CD4-positive, alpha-beta memory T cell (primary cell): ENCODE measurements at regions of chrX and their contacts with region 1.

Region 1: GRCh38 chrX:74550295-74550802 is 64.1 kb downstream of the RLIM start:
- DNase-seq: peak; percentile 75 to 83 (median 82)
- H3K4me3 ChIP-seq: peak overlapping the region in 1 of 2 donors; percentile 28
- H3K4me3 Mint-ChIP-seq: peak overlapping the region in 7 of 8 donors; percentile 60 to 86 (median 75)
- H3K27ac ChIP-seq: no peak overlapping the region
- H3K27ac Mint-ChIP-seq: peak overlapping the region in 5 of 7 donors; percentile 20 to 79 (median 51)
- H3K4me1 ChIP-seq: no peaks in the 10 kb centered on the region
- H3K4me1 Mint-ChIP-seq: peaks cover 1 to 4% (median 3%) of the 10 kb centered on the region in 4 donors
- H3K27me3 ChIP-seq: no peaks in the 10 kb centered on the region
- H3K27me3 Mint-ChIP-seq: peaks cover 0 to 2% of the 10 kb centered on the region in 2 donors

Region 2: DNA sequence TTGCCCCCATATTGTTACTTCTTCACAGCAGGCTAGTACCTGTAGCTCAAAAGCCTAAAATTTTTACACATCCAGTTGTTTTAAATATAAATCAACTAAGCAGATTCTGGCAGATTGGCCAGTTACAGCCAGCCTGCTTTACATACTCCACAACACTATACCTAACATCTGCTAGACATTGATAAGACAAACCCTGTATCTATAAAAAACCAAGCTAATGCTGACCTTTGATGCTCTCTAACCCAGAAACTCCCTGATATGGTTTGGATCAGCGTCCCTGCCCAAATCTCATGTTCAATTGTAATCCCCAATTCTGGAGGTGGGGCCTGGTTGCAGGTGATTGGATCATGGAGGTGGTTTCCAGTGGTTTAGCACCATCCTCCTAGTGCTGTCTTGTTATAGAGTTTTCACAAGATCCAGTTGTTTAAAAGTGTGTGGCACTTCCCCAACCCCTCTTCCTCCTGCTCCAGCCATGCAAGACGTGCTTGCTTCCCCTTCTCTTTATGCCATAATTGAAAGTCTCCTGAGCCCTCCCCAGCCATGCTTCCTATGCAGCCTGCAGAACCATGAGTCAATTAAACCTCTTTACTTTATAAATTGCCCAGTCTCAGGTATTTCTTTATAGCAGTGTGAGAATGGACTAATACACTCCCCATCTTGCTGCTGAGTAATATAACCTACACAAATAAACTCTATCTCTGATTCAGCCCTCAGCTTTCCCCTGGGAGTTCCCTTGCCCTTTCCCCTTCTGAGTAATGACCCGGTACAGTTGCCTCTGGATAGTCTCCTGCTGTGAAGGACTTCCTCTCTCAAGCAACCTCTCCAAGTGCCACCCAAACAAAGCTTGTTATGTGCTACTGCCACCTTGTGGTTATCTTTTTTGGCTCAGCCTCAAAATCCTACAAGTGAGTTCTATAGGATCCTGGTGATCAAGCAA is 206.7 kb before region 1 on chrX:
- CTCF ChIA-PET with region 1: no interaction called
- POLR2A ChIA-PET with region 1: no interaction called
- intact Hi-C with region 1: loop called (anchors 2 kb)
- DNase-seq: peak; percentile 43 to 57 (median 47)
- H3K4me3 ChIP-seq: no peak overlapping the region
- H3K4me3 Mint-ChIP-seq: no peak overlapping the region
- H3K27ac ChIP-seq: no peak overlapping the region
- H3K27ac Mint-ChIP-seq: no peak overlapping the region
- H3K4me1 ChIP-seq: no peaks in the 10 kb centered on the region
- H3K4me1 Mint-ChIP-seq: no peaks in the 10 kb centered on the region
- H3K27me3 ChIP-seq: no peaks in the 10 kb centered on the region
- H3K27me3 Mint-ChIP-seq: peaks cover 0 to 3% of the 10 kb centered on the region in 2 donors

Region 3: DNA sequence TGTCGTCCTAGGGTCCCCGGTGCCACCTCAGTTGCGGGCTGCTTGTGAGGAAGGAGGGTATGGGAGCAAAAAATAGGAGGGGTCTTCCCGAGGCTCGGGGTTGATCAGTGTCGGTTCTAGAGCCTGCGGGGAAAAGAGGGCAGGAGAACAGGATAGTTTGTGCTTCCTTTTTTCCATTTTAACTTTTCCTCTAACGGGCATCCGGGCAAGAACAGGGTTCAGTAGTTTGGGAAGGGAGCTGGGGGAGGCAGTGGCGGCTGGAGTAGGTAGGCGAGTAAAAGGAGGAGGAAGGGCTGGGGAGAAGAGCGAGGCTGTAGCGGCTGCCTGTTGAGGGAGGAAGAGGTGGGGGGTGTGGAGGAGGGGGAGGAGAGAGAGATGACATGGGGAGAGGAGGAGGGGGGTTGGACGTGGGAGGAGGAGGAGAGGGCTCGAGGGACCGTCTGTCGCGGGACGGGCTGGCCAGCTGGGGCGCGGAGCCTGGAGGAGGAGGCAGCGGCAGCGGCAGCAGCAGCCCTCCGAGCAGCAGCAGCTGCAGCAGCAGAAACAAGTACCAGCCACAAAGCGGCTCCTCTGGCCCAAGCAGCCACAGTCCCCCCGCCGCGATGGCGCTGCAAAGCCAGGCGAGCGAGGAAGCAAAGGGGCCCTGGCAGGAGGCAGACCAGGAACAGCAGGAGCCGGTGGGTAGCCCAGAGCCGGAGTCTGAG is 129.2 kb before region 1 on chrX and contains the start of gene SLC16A2:
- CTCF ChIA-PET with region 1: interaction called, 5 read pairs
- POLR2A ChIA-PET with region 1: no interaction called
- intact Hi-C with region 1: loop called (anchors 2 kb)
- DNase-seq: peak; percentile 13 to 46 (median 18)
- H3K4me3 ChIP-seq: peak within 1 kb of the TSS in 1 of 2 donors; percentile 35
- H3K4me3 Mint-ChIP-seq: peak within 1 kb of the TSS; percentile 76 to 85 (median 84)
- H3K27ac ChIP-seq: no peak within 1 kb of the TSS
- H3K27ac Mint-ChIP-seq: peak within 1 kb of the TSS in 3 of 7 donors; percentile 9 to 48 (median 15)
- H3K4me1 ChIP-seq: no peaks in the 10 kb centered on the region
- H3K4me1 Mint-ChIP-seq: peaks cover 4 to 19% (median 7%) of the 10 kb centered on the region in 4 donors
- H3K27me3 ChIP-seq: no peaks in the 10 kb centered on the region
- H3K27me3 Mint-ChIP-seq: peaks cover 4 to 12% of the 10 kb centered on the region in 2 donors
- total RNA-seq, gene SLC16A2: 0.19 to 0.35 TPM

Region 4: DNA sequence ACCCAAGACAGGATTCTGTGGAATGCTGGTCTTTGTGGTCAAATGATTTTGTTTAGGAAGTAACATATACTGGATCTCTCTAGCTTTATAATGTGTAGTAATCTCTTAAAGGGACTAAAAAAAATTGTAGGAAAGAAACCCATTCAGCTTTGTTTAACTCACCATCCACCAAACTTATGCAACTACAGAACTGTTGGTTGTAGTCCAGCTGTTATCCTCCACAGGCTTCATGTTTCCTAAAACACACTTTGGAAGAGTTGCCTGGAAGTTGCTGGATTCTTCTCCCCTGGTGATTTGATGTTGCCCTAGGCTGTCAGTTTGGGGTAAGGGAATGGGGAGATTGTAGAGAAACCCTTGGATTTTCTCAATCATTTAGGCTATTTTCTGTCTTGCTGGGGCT is 25.2 kb before region 1 on chrX:
- CTCF ChIA-PET with region 1: no interaction called
- POLR2A ChIA-PET with region 1: no interaction called
- intact Hi-C with region 1: no loop called
- DNase-seq: no peak
- H3K4me3 ChIP-seq: no peak overlapping the region
- H3K4me3 Mint-ChIP-seq: no peak overlapping the region
- H3K27ac ChIP-seq: no peak overlapping the region
- H3K27ac Mint-ChIP-seq: no peak overlapping the region
- H3K4me1 ChIP-seq: no peaks in the 10 kb centered on the region
- H3K4me1 Mint-ChIP-seq: no peaks in the 10 kb centered on the region
- H3K27me3 ChIP-seq: no peaks in the 10 kb centered on the region
- H3K27me3 Mint-ChIP-seq: no peaks in the 10 kb centered on the region

Region 5: GRCh38 chrX:74535408-74536151 is 14.8 kb before region 1 on chrX:
- CTCF ChIA-PET with region 1: interaction called, 3 read pairs
- POLR2A ChIA-PET with region 1: interaction called, 3 read pairs
- intact Hi-C with region 1: loop called (anchors 2 kb)
- DNase-seq: peak in 3 of 5 donors; percentile 19 to 54 (median 30)
- H3K4me3 ChIP-seq: peak overlapping the region; percentile 6 to 49
- H3K4me3 Mint-ChIP-seq: peak overlapping the region; percentile 83 to 88 (median 86)
- H3K27ac ChIP-seq: peak overlapping the region; percentile 40
- H3K27ac Mint-ChIP-seq: peak overlapping the region; percentile 78 to 94 (median 85)
- H3K4me1 ChIP-seq: peaks cover 17% of the 10 kb centered on the region
- H3K4me1 Mint-ChIP-seq: peaks cover 5 to 27% (median 9%) of the 10 kb centered on the region in 4 donors
- H3K27me3 ChIP-seq: no peaks in the 10 kb centered on the region
- H3K27me3 Mint-ChIP-seq: no peaks in the 10 kb centered on the region

Region 6: GRCh38 chrX:74814681-74815080 is 264.3 kb after region 1 on chrX:
- CTCF ChIA-PET with region 1: no interaction called
- POLR2A ChIA-PET with region 1: no interaction called
- intact Hi-C with region 1: no loop called
- DNase-seq: no peak
- H3K4me3 ChIP-seq: no peak overlapping the region
- H3K4me3 Mint-ChIP-seq: no peak overlapping the region
- H3K27ac ChIP-seq: no peak overlapping the region
- H3K27ac Mint-ChIP-seq: no peak overlapping the region
- H3K4me1 ChIP-seq: no peaks in the 10 kb centered on the region
- H3K4me1 Mint-ChIP-seq: no peaks in the 10 kb centered on the region
- H3K27me3 ChIP-seq: no peaks in the 10 kb centered on the region
- H3K27me3 Mint-ChIP-seq: peaks cover 0 to 4% of the 10 kb centered on the region in 2 donors

Region 7: GRCh38 chrX:75603833-75604232 is 1053.5 kb after region 1 on chrX:
- CTCF ChIA-PET with region 1: no interaction called
- POLR2A ChIA-PET with region 1: no interaction called
- intact Hi-C with region 1: loop called (anchors 5 kb)
- DNase-seq: peak in 4 of 5 donors; percentile 26 to 35 (median 30)
- H3K4me3 ChIP-seq: no peak overlapping the region
- H3K4me3 Mint-ChIP-seq: no peak overlapping the region
- H3K27ac ChIP-seq: no peak overlapping the region
- H3K27ac Mint-ChIP-seq: no peak overlapping the region
- H3K4me1 ChIP-seq: no peaks in the 10 kb centered on the region
- H3K4me1 Mint-ChIP-seq: no peaks in the 10 kb centered on the region
- H3K27me3 ChIP-seq: no peaks in the 10 kb centered on the region
- H3K27me3 Mint-ChIP-seq: peaks cover 0 to 2% of the 10 kb centered on the region in 2 donors